Panc1 (cell line): ENCODE measurements at regions of chr1 and their contacts with region 1.

Region 1: DNA sequence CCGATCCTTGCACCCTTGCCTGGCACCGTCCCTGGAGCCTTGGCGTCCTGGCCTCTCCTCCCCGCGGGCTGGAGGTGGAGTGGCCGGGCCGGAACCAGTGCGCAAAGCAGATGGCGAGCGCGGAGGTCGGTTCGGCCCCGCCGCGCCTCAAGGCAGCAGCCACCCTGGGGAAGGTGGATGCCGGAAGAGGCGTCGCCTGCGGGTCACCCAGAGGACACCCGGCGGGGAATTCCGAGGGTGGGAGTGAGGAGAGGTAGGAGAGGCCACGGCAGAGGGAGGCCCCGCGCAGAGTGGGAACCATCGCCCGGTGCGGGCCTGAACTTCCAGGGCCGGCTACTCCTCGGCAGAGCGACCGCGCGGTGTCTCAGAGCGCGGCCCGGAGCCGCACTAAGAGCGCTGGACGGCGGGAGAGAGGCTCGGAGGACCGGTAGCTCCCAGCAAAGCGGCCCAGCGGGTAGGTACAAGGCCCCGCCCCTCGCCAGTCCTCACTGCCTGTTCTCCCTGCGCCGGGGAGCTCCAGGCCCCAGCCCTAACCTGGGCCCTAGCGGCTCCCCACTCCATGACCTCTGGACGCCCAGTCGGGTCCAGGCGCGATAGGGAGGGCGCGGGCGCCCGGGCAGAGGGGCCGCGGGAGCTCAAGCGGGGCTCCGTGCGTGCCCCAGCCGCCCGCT is at the start of gene RNF207:
- DNase-seq: no peak
- ATAC-seq: peak; percentile 83
- H3K4me3 ChIP-seq: peak within 1 kb of the TSS; percentile 74 to 77
- H3K27ac ChIP-seq: peak within 1 kb of the TSS; percentile 90
- H3K4me1 ChIP-seq: peaks cover 5% of the 10 kb centered on the region
- H3K27me3 ChIP-seq: no peaks in the 10 kb centered on the region
- CTCF ChIP-seq: no peak
- total RNA-seq, gene RNF207: 115 TPM

Region 2: GRCh38 chr1:5973771-5974170 is 232.2 kb before region 1 on chr1:
- CTCF ChIA-PET with region 1: no interaction called
- POLR2A ChIA-PET with region 1: no interaction called
- in situ Hi-C with region 1: no loop called
- intact Hi-C with region 1: no loop called
- DNase-seq: no peak
- ATAC-seq: no peak
- H3K4me3 ChIP-seq: no peak overlapping the region
- H3K27ac ChIP-seq: no peak overlapping the region
- H3K4me1 ChIP-seq: no peaks in the 10 kb centered on the region
- H3K27me3 ChIP-seq: no peaks in the 10 kb centered on the region
- CTCF ChIP-seq: no peak

Region 3: GRCh38 chr1:6094801-6095505 is 111.0 kb before region 1 on chr1:
- CTCF ChIA-PET with region 1: no interaction called
- POLR2A ChIA-PET with region 1: no interaction called
- in situ Hi-C with region 1: no loop called
- intact Hi-C with region 1: no loop called
- DNase-seq: no peak
- ATAC-seq: no peak
- H3K4me3 ChIP-seq: no peak overlapping the region
- H3K27ac ChIP-seq: no peak overlapping the region
- H3K4me1 ChIP-seq: no peaks in the 10 kb centered on the region
- H3K27me3 ChIP-seq: no peaks in the 10 kb centered on the region
- CTCF ChIP-seq: no peak

Region 4: DNA sequence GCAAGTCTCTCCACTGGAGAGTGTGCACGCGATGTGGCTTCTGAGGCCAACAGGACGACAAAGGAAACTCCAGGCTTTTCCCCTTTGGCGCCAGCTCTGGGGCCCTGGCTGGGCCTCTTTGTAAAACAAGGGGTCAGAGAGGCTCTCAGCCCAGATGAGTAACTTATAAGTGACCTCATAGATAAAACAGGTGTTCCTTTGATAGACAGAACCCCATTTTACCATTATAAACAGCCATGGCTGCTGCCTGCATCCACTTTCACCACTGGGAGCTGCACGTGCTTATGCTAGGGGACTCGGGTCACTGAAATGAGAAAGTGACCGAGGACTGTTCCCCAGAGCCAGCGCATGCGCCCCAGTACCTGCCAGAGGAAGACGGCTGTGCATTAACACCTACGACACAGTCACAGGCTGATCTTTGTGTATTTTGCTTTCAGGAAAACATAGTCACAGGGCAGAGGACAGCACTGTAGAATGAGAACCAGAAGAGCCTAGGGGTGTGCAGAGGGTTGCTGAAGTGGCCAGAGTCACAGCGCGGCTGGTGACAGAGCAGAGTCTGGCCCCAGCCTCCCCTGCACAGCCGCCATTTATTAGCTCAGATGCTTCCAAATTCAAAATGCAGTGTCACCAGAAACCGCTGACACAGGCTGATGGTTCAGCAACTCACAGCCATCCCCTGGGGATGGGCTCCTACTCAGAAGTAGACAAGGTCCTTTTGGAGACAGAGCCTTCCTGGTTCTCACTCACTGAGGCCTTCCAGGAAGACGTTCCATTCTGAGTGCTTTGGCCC is 12.6 kb after region 1 on chr1:
- CTCF ChIA-PET with region 1: interaction called, 12 read pairs
- POLR2A ChIA-PET with region 1: interaction called, 3 read pairs
- in situ Hi-C with region 1: no loop called
- intact Hi-C with region 1: no loop called
- DNase-seq: no peak
- ATAC-seq: no peak
- H3K4me3 ChIP-seq: no peak overlapping the region
- H3K27ac ChIP-seq: no peak overlapping the region
- H3K4me1 ChIP-seq: no peaks in the 10 kb centered on the region; the same call in 1 of the 2 replicates
- H3K27me3 ChIP-seq: no peaks in the 10 kb centered on the region
- CTCF ChIP-seq: no peak

Region 5: GRCh38 chr1:6287431-6287886 is 81.5 kb after region 1 on chr1:
- CTCF ChIA-PET with region 1: interaction called, 10 read pairs
- POLR2A ChIA-PET with region 1: no interaction called
- in situ Hi-C with region 1: no loop called
- intact Hi-C with region 1: no loop called
- DNase-seq: no peak
- ATAC-seq: no peak
- H3K4me3 ChIP-seq: no peak overlapping the region
- H3K27ac ChIP-seq: no peak overlapping the region
- H3K4me1 ChIP-seq: no peaks in the 10 kb centered on the region
- H3K27me3 ChIP-seq: no peaks in the 10 kb centered on the region
- CTCF ChIP-seq: no peak

Region 6: GRCh38 chr1:7026169-7026568 is 820.2 kb after region 1 on chr1:
- CTCF ChIA-PET with region 1: no interaction called
- POLR2A ChIA-PET with region 1: interaction called, 16 read pairs
- in situ Hi-C with region 1: no loop called
- intact Hi-C with region 1: no loop called
- DNase-seq: no peak
- ATAC-seq: no peak
- H3K4me3 ChIP-seq: no peak overlapping the region
- H3K27ac ChIP-seq: no peak overlapping the region
- H3K4me1 ChIP-seq: no peaks in the 10 kb centered on the region
- H3K27me3 ChIP-seq: peaks cover 5% of the 10 kb centered on the region; the same call in 1 of the 2 replicates
- CTCF ChIP-seq: no peak